ENCODE measurements at regions of chr3 and their contacts with region 1.

Region 1: DNA sequence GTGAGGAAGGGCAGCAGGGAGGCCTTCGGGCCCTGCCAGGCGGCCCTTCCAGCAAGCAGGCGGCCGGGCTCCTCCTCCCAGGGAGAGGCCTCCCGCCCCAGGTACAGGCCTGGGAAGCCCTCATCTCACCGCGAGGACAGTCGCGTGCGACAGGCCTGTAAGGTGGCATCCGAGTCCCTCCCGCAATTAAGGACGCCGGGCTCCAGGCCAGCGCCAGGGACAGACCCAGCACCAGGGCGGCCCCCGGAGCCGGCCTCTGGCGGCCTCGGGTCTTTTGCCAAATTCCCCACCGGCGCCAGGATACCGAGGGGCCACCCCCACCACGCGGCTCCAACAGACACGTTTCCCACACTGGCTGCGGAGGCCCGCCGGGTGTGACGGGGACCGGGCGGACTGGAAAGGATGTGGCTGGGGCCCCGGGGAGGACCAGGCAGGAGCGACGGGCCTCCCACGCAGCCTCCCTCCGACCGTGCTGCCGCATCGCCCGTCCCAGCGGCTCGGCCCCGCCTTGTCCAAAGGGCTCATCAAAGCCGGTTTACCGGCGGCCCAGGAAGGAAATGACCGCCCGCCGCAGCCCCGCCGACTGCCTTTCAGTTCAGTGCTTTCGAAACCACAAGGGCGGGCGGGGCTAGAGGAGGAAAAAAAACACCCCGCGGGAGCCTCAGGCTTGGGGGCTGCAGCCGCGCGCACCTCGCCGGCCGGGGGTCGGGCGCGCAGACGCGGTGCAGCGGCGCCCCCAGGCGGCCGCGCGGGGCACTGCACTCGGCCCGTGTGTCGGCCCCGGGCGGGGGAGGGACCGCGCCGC is 11.3 kb downstream of the XXYLT1 start:
- DNase-seq: peak; percentile 90
- H3K4me3 ChIP-seq: peak overlapping the region; percentile 62
- H3K27ac ChIP-seq: peak overlapping the region; percentile 74
- H3K4me1 ChIP-seq: peaks cover 5% of the 10 kb centered on the region
- H3K27me3 ChIP-seq: no peaks in the 10 kb centered on the region
- CTCF ChIP-seq: peak; percentile 31

Region 2: DNA sequence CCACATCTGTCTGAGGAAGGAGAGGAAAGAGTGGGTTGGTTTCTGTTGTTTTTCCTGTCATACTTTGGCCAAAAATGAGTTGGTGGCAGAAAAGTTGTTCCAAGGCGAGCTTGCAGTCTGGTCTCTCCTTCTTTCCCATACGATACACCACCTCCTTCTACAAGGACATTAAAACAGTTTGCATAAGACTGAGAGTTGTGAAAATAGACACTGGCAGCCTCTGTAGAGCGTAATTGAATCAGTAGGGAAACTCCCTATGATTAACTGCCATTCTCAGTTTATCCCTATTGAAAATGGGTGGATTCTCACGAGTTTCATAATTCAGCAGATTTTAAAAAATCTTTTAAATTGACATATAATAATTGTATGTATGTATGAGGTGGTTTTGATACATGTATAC is 584.0 kb before region 1 on chr3:
- intact Hi-C with region 1: loop called (anchors 2 kb)
- DNase-seq: no peak
- H3K4me3 ChIP-seq: no peak overlapping the region
- H3K27ac ChIP-seq: no peak overlapping the region
- H3K4me1 ChIP-seq: peaks cover 6% of the 10 kb centered on the region
- H3K27me3 ChIP-seq: no peaks in the 10 kb centered on the region
- CTCF ChIP-seq: no peak

Region 3: DNA sequence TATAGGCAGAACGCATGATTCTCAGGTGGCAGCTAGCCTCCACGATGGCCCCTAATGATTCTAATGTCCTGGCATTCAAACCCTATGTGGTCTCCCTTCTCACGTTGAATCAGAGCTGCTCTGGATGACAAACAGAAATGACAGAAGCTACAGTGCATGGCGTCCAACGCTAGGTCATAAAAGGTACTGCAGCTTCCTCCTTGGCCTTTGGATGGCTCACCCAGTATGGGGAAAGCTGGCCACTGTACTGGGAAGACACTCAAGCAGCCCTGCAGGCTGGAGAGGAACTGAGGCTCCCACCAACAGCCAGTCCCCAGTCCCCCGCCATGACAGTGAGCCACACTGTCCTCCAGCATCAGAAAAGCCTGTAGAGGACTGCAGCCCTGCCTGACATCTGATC is 287.7 kb before region 1 on chr3:
- intact Hi-C with region 1: no loop called
- DNase-seq: no peak
- H3K4me3 ChIP-seq: no peak overlapping the region
- H3K27ac ChIP-seq: no peak overlapping the region
- H3K4me1 ChIP-seq: no peaks in the 10 kb centered on the region
- H3K27me3 ChIP-seq: no peaks in the 10 kb centered on the region
- CTCF ChIP-seq: no peak

Region 4: DNA sequence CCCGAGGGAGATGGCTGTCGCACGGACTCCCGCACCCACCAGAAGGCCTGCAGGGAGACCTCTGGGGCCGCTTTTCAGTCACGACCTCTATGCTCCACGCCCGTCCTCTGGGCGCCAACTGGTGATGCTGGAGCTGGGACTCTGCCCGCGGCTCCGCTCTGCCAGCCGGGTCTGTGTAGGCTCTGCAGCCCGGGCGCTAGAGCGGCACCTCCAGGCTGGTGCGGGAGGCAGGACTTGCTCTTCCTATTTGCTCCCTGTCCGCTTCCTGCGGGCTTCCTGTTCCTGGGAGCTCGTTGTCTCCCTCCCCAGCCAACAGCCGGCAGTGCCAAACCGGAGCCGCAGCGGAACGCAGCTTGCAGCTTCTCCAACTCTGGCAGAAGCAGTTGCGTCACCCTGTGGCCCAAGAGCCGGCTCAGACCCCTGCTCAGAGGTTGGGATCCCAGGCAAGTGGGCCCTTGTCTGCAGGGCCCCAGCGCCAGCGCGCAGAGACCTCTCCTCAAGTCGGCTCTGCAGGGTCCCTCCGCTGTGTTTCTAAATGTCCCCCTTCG is 274.6 kb before region 1 on chr3:
- intact Hi-C with region 1: loop called (anchors 10 kb)
- DNase-seq: peak; percentile 77
- H3K4me3 ChIP-seq: peak overlapping the region; percentile 30
- H3K27ac ChIP-seq: peak overlapping the region; percentile 13
- H3K4me1 ChIP-seq: peaks cover 5% of the 10 kb centered on the region
- H3K27me3 ChIP-seq: peaks cover 3% of the 10 kb centered on the region
- CTCF ChIP-seq: peak; percentile 32

Region 5: DNA sequence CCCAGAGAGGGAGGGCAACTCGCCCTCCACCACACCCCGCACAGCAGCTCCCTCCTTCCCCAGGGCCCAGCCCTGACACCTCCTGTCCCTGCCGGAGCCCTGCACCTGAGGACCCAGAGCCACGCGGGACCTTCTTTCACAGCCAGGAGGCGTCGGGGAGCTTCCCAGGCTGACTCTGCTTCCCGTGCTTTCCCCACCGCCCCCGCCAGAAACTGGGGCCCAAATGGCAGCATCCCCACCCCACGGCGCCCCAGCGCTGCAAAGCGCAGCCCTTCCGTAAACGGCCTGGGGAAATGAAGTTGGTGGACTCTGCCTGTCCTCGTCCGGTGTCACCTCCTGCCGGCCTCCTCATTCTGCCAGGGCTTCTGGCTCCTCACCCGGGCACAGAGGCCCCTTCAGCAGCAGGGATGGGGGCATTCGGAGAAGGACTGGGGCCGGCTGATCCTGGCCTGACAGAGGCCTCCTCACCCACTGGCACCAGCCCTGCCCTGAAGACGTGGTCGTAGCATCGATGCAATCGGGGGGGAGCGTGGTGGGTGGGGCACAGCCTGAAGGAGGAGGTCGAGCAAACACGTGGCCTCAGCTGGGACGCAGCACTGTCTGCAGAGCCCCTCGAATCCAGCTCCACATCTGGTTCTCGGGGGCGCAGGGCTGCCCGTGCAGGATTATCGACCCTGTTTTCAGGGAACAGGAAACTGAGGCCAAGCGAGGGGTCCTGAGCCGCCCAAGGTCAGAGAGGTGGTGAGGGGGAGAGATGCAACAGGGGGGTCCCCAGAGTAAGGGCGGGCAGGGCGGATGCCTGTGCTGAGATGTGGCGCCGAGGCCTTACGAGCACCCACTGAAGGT is 224.1 kb before region 1 on chr3:
- intact Hi-C with region 1: no loop called
- DNase-seq: no peak
- H3K4me3 ChIP-seq: no peak overlapping the region
- H3K27ac ChIP-seq: no peak overlapping the region
- H3K4me1 ChIP-seq: no peaks in the 10 kb centered on the region
- H3K27me3 ChIP-seq: no peaks in the 10 kb centered on the region
- CTCF ChIP-seq: no peak

Region 6: DNA sequence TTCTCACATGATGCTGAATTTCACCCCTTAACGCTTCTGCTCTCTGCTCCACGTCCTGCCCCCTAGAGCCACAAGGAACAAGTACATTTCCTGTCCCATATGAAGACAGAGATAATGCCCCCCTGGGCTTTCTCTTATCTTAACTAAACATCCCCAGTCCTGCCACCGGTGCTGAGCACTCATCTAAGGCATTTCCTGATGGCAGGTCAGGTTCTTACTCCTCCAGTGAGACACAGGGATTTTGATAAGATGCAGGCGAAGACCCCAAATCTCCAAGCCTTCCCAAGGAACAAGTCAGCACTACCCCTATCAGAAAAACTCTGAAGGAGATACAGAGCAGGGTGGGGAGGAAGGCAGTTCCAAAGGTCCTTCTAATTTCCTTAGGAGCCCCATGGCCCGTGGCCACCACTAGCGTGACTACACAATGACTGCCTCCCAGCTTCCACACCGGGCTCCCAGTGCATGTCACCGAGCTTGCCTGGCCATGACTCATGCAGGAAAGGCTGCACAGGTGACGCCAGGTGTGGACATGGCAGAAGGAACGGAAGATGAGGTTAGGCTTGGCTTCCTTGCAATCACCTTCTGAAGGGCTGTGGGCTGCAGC is 141.6 kb before region 1 on chr3:
- intact Hi-C with region 1: loop called (anchors 10 kb)
- DNase-seq: peak; percentile 34
- H3K4me3 ChIP-seq: no peak overlapping the region
- H3K27ac ChIP-seq: no peak overlapping the region
- H3K4me1 ChIP-seq: no peaks in the 10 kb centered on the region
- H3K27me3 ChIP-seq: no peaks in the 10 kb centered on the region
- CTCF ChIP-seq: no peak

Region 7: GRCh38 chr3:195312714-195313113 is 53.0 kb after region 1 on chr3:
- intact Hi-C with region 1: no loop called
- DNase-seq: no peak
- H3K4me3 ChIP-seq: no peak overlapping the region
- H3K27ac ChIP-seq: no peak overlapping the region
- H3K4me1 ChIP-seq: no peaks in the 10 kb centered on the region
- H3K27me3 ChIP-seq: no peaks in the 10 kb centered on the region
- CTCF ChIP-seq: no peak

Region 8: DNA sequence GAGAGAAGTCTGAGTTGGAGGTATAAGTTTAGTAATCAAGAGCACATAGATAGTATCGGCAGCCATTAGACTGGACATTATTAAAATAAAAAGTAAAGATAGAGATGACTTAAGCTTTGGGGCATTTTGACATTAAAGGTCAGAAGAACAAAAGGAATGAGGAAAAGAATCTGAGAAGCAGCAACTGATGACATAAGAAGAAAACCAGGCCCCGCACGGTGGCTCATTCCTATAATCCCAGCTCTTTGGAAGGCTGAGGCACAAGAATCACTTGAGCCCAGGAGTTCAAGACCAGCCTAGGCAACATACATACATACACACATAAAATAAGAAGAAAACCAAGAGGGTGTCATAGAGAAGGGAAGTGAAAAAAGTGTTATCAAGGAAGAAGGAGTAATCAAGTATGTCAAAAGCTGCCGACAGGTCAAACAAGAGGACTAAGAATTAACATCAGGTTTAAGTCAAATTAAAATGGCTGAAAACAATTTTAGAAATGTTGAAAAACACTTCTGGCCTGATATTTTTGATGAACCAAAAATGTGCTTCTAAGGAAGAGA is 144.3 kb after region 1 on chr3:
- intact Hi-C with region 1: no loop called
- DNase-seq: no peak
- H3K4me3 ChIP-seq: no peak overlapping the region
- H3K27ac ChIP-seq: no peak overlapping the region
- H3K4me1 ChIP-seq: no peaks in the 10 kb centered on the region
- H3K27me3 ChIP-seq: no peaks in the 10 kb centered on the region
- CTCF ChIP-seq: no peak